ENCODE measurements at regions of chr1 and their contacts with region 1.

Region 1: DNA sequence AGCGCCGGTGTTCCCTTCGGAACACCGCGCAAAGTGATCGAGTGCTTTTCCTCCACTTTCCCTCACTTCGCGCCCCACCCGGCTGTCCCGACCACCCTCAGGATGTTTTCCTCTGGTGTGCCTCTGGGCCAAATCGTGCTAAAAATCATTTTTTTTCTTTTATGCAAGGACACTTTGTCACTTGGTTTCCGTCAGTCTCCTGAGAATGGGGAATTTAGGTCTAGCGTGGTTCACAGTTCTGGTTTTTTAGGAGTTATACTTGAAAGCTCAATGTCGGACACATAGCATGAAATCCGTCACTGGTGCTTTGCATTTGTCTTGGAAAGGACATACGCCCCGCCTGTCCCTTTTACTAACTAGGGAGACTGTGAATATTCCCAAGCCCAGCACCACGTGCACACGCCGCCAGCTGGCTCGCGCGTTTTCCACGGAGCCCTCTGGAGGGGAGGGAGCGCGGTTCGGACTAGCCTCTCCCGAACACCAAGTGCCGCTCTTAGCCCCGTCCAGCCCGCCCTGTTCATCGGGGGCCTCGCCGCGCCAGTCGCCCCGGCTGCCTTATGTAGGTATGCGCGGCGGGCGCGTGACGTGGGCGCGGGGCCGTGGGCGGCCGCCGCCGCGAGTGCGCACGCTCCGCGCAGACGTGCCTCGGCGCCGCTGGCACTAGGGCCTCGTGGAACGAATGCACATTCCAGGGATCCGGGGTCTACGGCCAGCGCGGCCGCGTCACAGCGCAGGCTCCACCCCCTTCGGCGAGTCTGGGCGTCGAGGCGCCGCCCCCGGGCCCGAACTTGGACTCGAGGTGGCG is 572 bp upstream of the IRF2BP2 start:
- DNase-seq: peak; percentile 97

Region 2: GRCh38 chr1:234699795-234700665 is 89.5 kb after region 1 on chr1:
- intact Hi-C with region 1: loop called (anchors 5 kb)
- DNase-seq: no peak

Region 3: GRCh38 chr1:234887016-234887900 is 276.7 kb after region 1 on chr1:
- intact Hi-C with region 1: loop called (anchors 2 kb)
- DNase-seq: no peak

Region 4: DNA sequence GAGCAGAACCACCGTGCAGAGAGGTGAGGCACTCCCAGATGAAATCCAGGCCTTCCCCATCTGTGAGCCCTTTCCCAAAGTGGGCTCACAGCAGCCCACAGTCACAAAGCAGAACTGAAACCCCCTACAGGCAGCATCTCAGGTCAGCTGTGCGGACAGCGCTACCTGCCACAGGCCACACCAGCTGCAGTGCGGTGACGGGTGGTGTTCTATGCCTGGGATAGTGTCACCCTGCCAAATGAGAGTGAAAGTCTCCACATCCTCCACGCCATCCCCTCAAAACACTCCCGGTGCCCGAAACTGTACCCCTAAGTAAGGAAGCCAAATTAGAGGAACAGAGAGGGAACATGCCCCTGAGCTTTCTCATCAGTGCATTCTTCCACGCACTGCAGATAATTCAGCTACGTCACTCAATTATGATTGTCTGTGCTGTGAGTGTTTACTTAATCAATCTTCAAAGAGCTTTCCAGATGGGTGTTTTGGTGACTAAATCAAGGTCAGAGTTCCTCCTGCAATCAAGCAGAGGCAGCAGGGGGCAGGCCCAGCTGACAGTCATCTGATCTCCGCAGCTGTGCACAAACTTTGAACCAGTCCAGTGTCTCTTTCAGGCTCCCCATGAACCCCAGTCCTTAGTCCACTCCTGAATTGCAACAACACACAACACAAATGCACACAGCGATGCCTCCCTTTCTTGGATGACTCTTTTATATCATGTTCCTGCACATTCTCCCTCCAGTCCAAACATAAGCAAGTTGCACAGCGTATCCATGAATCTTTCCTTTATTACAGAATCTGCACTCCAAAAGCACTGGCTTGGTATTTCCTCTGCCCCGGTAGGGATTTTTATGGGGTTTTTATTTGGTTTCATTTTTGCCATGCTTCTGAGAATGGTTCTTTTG is 368.1 kb after region 1 on chr1:
- intact Hi-C with region 1: loop called (anchors 5 kb)
- DNase-seq: peak; percentile 76

Region 5: DNA sequence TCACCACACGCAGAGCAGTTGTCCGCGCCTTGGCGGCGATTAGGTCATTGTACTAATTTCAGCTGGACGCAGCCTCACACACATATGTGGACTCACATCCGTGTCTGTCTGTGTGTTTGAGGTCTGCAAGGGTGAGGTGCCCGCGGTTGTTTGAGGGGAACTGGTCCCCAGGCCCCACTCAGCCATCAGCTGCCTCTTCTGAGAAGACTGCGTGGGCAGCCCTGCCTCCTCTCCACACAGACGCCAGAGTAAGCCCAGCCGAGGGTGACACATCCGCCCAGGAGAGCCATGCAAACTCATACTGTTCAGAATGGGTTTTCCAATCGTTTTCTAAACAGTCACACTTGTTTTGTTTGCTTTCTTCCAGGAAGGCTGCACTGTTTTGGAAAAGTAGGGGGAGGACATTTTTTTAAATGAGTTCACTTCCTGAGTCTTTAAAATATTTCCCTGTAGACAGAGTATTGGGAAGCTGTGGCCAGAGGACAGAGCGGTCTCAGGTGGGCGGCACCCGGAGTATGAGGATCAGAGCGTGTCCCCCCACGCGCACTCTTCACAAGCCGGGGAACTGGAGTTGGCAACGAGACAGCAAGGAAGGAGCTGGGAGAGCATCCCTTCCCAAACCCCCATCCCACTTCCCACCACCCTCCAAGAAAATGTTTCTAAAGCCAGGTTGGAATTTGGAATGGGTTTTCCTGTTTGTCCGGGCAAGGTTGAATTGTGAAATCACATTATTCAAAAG is 464.8 kb after region 1 on chr1:
- intact Hi-C with region 1: loop called (anchors 2 kb)
- DNase-seq: peak; percentile 89